Activated B cell treated with CpG ODN at 0.5 μM for 24 hours (primary cell): ENCODE measurements at regions of chr14 and their contacts with region 1.

Region 1: GRCh38 chr14:101774006-101774795 is 12.7 kb downstream of the PPP2R5C start:
- DNase-seq: peak; percentile 42
- ATAC-seq: peak; percentile 79
- H3K4me3 Mint-ChIP-seq: peak overlapping the region; percentile 49
- H3K27ac Mint-ChIP-seq: peak overlapping the region; percentile 81
- H3K4me1 Mint-ChIP-seq: peaks cover 58% of the 10 kb centered on the region
- H3K27me3 Mint-ChIP-seq: no peaks in the 10 kb centered on the region
- CTCF ChIP-seq: no peak

Region 2: DNA sequence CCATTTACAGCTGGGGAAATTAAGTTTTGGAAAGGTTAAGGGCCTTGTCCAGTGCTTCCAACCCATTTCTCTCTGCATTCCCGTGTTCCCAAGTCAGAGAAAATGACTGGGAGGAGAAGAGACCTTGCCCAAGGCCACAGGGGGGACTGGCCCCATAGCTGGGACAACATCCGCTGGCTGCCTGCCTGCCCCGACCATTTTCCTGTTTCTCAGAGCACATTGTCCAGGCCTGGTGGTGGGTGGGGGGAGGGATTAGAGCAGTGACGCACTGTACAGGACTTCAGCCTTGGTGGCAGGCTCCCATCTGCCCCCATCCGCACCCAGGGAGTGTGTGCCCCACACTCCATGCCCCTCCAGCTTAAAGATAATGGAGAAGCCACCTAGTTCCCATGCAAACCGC is 185.2 kb before region 1 on chr14:
- CTCF ChIA-PET with region 1: no interaction called
- POLR2A ChIA-PET with region 1: no interaction called
- intact Hi-C with region 1: no loop called
- DNase-seq: no peak
- ATAC-seq: no peak
- H3K4me3 Mint-ChIP-seq: no peak overlapping the region
- H3K27ac Mint-ChIP-seq: no peak overlapping the region
- H3K4me1 Mint-ChIP-seq: no peaks in the 10 kb centered on the region
- H3K27me3 Mint-ChIP-seq: no peaks in the 10 kb centered on the region
- CTCF ChIP-seq: no peak

Region 3: DNA sequence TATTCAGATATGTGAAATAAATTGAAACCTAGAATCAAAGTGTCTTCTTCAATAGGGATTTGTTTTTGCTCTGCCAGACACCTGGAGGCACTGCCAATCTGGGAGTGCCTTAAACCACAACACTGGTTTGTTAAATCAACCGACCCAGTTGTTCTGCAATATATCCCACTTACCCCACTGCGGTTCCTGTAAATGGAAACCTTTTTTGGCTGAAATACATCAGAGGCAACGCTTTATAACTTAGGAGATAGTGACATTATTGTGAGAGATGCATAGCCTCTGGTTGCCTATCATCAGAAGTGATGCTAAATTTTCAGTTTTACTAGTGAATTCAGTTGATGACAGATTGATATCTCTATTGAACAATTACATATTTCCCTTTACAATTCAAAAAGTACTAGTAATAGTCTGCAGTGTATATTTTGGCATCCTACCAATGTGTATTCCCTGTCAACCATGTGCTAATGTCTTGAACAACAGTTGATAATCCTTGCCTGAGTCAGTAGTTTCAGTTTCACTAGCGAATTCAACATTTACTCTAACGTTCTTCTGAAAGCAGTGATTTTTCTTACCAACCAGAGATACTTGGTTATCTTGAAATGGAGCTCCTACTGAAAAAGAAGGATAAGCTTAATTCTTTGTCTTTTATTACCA is 17.8 kb after region 1 on chr14:
- CTCF ChIA-PET with region 1: interaction called, 5 read pairs
- POLR2A ChIA-PET with region 1: interaction called, 6 read pairs
- intact Hi-C with region 1: loop called (anchors 2 kb)
- DNase-seq: no peak
- ATAC-seq: peak; percentile 64
- H3K4me3 Mint-ChIP-seq: peak overlapping the region; percentile 36
- H3K27ac Mint-ChIP-seq: peak overlapping the region; percentile 36
- H3K4me1 Mint-ChIP-seq: peaks cover 23% of the 10 kb centered on the region
- H3K27me3 Mint-ChIP-seq: no peaks in the 10 kb centered on the region
- CTCF ChIP-seq: no peak

Region 4: DNA sequence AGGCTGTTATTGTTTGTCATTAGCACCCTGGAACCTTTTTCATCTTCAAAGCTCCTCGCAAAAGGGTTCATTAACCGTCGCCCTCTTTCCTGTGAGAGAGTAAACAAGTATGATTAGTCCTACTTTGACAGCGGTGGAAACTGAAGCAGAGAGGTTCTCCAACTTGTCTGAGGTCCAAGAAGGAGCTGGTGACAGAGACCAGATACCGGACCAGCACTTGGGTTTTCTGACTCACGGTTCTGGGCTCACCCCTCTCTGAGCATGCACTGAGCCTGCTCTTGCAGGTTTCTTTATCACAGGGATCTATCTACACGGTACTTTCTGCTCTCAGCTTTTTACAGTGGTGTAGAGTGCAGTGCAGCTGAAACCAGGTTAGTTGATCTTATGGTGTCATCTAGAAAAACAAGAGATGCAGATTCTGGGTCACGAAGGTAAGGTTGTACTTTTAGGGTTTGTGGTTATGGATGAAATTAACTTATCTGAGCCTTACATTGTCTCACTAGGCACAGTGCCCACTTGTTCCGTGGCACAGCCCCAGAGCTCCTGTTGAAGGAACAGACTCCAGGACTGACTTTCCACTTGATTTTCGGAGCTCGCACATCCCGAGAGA is 49.4 kb after region 1 on chr14:
- CTCF ChIA-PET with region 1: interaction called, 19 read pairs
- POLR2A ChIA-PET with region 1: interaction called, 33 read pairs
- intact Hi-C with region 1: loop called (anchors 1 kb)
- DNase-seq: no peak
- ATAC-seq: peak; percentile 31
- H3K4me3 Mint-ChIP-seq: peak overlapping the region; percentile 80
- H3K27ac Mint-ChIP-seq: peak overlapping the region; percentile 99
- H3K4me1 Mint-ChIP-seq: peaks cover 91% of the 10 kb centered on the region
- H3K27me3 Mint-ChIP-seq: no peaks in the 10 kb centered on the region
- CTCF ChIP-seq: no peak

Region 5: GRCh38 chr14:101889898-101890297 is 115.7 kb after region 1 on chr14:
- CTCF ChIA-PET with region 1: interaction called, 13 read pairs
- POLR2A ChIA-PET with region 1: no interaction called
- intact Hi-C with region 1: loop called (anchors 5 kb)
- DNase-seq: no peak
- ATAC-seq: no peak
- H3K4me3 Mint-ChIP-seq: no peak overlapping the region
- H3K27ac Mint-ChIP-seq: peak overlapping the region; percentile 35
- H3K4me1 Mint-ChIP-seq: no peaks in the 10 kb centered on the region
- H3K27me3 Mint-ChIP-seq: no peaks in the 10 kb centered on the region
- CTCF ChIP-seq: no peak

Region 6: GRCh38 chr14:102096214-102097114 is 322.3 kb after region 1 on chr14:
- CTCF ChIA-PET with region 1: interaction called, 9 read pairs
- POLR2A ChIA-PET with region 1: no interaction called
- intact Hi-C with region 1: loop called (anchors 5 kb)
- DNase-seq: peak; percentile 46
- ATAC-seq: peak; percentile 56
- H3K4me3 Mint-ChIP-seq: no peak overlapping the region
- H3K27ac Mint-ChIP-seq: no peak overlapping the region
- H3K4me1 Mint-ChIP-seq: peaks cover 4% of the 10 kb centered on the region
- H3K27me3 Mint-ChIP-seq: no peaks in the 10 kb centered on the region
- CTCF ChIP-seq: no peak

Region 7: DNA sequence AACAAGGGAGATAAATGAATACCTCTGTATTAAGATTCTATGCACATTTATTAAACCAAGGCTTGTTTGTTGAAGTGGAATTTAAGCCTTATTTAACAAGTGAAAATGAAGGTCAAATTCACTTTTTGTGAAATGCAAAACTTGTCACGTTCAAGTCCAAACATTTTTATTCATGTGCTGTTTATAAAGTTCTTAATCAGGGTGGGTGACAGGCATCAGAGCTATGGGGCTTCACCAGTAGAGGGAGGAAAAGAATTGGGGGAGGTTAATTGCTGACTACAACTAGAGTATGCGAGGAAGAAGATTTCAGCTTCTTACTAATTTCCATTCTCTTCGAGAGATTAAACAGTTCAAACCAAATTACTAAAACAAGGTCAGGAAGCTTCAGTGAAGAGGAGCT is 521.1 kb after region 1 on chr14:
- CTCF ChIA-PET with region 1: no interaction called
- POLR2A ChIA-PET with region 1: no interaction called
- intact Hi-C with region 1: no loop called
- DNase-seq: no peak
- ATAC-seq: no peak
- H3K4me3 Mint-ChIP-seq: no peak overlapping the region
- H3K27ac Mint-ChIP-seq: no peak overlapping the region
- H3K4me1 Mint-ChIP-seq: no peaks in the 10 kb centered on the region
- H3K27me3 Mint-ChIP-seq: peaks cover 8% of the 10 kb centered on the region
- CTCF ChIP-seq: no peak